AG04450 (cell line): ENCODE measurements at regions of chr12 and their contacts with region 1.

Region 1: DNA sequence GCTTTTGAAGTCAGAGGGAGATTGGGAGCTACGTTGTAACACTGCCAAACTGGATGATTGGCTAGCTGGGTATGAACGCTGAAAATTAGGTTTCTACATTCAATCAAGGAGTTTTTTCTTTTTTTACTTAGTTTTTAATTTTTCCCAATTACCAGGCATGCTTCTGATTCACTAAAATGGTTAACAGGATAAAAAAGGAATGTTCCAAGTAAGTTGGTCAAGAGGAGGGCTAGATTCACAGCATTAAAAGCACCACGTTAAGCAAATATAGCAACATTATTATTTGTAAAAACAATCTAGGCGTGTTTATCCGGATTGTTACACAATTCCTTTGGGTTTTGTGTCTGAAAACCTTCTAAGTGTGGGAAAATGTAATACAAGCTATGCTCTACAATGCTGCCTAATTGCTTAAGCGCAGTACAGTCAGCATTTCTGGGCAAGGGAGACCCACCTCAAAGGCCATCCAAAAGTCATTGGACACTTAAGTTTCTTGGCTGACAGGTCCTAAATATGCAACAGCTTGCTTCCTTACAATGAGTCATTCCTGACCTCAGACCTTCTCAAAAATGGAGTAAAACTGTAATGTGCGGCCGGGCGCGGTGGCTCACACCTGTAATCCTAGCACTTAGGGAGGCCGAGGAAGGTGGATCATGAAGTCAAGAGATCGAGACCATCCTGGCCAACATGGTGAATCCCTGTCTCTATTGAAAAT is 1.2 kb downstream of the RPLP0 start:
- DNase-seq: peak; percentile 16
- H3K4me3 ChIP-seq: peak overlapping the region; percentile 75
- H3K27ac ChIP-seq: peak overlapping the region; percentile 75
- H3K27me3 ChIP-seq: no peaks in the 10 kb centered on the region
- CTCF ChIP-seq: no peak

Region 2: DNA sequence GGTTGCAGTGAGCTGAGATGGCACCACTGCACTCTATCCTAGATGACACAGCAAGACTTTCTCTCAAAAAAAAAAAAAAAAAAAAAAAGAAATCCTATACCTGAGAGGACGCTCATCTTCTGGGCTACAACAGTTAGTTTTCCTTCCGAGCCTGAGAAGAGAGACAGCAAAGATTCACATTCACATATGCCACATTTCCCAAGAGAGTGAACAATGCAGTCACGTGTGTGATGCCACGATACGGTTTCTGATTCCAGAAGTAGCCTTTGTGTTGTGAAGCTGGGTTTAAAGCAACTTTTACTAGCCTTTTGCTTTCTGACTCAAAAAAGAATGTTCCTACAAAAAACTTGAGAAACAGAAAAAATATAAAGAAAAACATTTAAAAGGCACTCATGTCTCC is 24.7 kb before region 1 on chr12:
- CTCF ChIA-PET with region 1: interaction called, 4 read pairs
- POLR2A ChIA-PET with region 1: interaction called, 10 read pairs
- DNase-seq: no peak
- H3K4me3 ChIP-seq: no peak overlapping the region
- H3K27ac ChIP-seq: no peak overlapping the region
- H3K27me3 ChIP-seq: no peaks in the 10 kb centered on the region
- CTCF ChIP-seq: no peak

Region 3: DNA sequence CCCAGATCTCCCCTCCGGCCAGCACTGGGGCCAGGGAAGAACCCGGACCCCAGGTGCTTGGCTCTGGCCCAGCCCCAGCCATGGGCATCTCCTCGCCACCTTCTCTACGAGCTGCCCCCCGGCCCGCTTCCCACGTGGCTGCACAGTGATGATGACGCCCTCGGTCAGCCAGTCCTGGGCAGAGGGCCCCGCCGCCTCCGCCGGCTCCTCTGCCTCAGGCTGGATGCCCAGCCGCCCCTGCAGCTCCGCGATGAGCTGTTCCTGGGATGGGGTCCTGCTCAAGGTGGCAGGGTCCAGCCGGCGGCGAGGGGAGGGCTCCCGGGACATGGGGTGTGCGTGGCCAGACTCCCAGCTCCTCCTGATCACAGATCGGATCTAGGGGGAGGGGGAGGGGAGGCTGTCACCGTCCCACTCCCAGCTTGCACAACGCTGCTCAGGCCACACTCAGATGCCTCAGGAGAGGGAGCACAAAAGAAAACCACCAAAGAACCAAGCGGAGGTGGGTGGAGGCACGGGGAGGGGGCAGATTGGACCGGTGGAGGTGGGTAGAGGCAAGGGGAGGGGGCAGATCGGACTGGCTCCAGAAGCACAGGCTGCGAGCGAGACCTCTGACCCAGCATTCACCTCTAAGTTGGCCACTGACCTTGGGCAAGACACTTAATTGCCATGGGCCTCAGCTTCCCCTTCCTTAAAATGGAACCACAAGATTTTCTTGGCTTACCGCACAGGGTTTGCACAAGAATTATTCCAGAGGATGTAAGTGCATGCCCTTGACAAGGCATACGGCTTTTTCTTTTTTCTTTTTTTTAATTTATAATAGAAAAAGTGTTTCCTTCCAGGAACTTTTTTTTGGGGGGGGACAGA is 17.2 kb after region 1 on chr12:
- CTCF ChIA-PET with region 1: interaction called, 11 read pairs
- POLR2A ChIA-PET with region 1: interaction called, 29 read pairs
- DNase-seq: no peak
- H3K4me3 ChIP-seq: no peak overlapping the region
- H3K27ac ChIP-seq: no peak overlapping the region
- H3K27me3 ChIP-seq: no peaks in the 10 kb centered on the region
- CTCF ChIP-seq: no peak

Region 4: GRCh38 chr12:120249875-120250795 is 50.4 kb after region 1 on chr12:
- CTCF ChIA-PET with region 1: interaction called, 7 read pairs
- POLR2A ChIA-PET with region 1: interaction called, 10 read pairs
- DNase-seq: no peak
- H3K4me3 ChIP-seq: no peak overlapping the region
- H3K27ac ChIP-seq: peak overlapping the region; percentile 47
- H3K27me3 ChIP-seq: no peaks in the 10 kb centered on the region
- CTCF ChIP-seq: no peak

Region 5: GRCh38 chr12:120276734-120277133 is 77.0 kb after region 1 on chr12:
- CTCF ChIA-PET with region 1: interaction called, 6 read pairs
- POLR2A ChIA-PET with region 1: interaction called, 15 read pairs
- DNase-seq: no peak
- H3K4me3 ChIP-seq: no peak overlapping the region
- H3K27ac ChIP-seq: no peak overlapping the region
- H3K27me3 ChIP-seq: no peaks in the 10 kb centered on the region
- CTCF ChIP-seq: no peak

Region 6: DNA sequence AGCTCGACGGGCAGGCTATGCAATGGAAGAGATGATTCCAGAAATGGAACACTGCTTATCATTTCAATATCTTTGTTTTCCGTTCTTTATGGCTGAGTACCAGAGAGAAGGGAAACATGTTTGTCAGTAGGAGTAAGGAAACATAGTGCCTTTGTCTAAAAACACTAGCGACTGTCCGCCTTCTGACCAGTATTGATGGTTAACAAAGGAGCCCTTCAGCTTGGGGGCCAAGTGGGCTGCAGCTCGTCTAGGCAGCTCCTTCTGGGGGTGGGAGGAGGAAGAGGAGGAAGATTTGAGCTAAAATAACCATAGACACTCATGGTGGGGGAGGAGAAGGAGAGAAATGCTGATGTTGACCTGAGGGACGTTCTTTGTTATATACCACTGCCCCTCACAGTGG is 314.3 kb after region 1 on chr12:
- CTCF ChIA-PET with region 1: no interaction called
- POLR2A ChIA-PET with region 1: no interaction called
- DNase-seq: no peak
- H3K4me3 ChIP-seq: no peak overlapping the region
- H3K27ac ChIP-seq: no peak overlapping the region
- H3K27me3 ChIP-seq: no peaks in the 10 kb centered on the region
- CTCF ChIP-seq: no peak